Activated CD4-positive, alpha-beta memory T cell treated with anti-CD3 and anti-CD28 coated beads for 36 hours (primary cell): ENCODE measurements at regions of chr17 and their contacts with region 1.

Region 1: GRCh38 chr17:32659419-32659842 is 172.6 kb downstream of the CDK5R1 start:
- DNase-seq: peak; percentile 80
- H3K4me3 Mint-ChIP-seq: no peak overlapping the region
- H3K27ac Mint-ChIP-seq: no peak overlapping the region
- H3K4me1 Mint-ChIP-seq: no peaks in the 10 kb centered on the region
- H3K27me3 Mint-ChIP-seq: no peaks in the 10 kb centered on the region

Region 2: DNA sequence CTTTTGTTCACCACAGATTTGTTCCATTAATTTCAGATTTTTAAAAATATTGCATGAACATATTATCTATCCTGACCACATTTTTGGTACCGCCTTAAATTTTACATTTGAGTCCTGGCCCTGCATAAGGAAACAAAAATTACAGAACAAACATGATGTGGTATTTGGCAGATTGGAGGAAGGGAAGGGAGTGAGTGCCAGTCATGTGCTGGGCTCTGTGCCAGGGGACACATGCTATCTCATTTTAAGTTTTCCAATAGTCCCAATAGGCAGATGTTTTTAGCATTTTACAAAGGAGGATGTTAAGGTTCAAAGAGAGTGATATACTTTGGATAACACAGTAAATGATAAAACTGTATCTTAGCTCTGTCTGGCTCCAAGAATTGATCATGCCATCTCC is 12.5 kb after region 1 on chr17:
- CTCF ChIA-PET with region 1: interaction called, 14 read pairs
- POLR2A ChIA-PET with region 1: no interaction called
- intact Hi-C with region 1: no loop called
- DNase-seq: no peak
- H3K4me3 Mint-ChIP-seq: no peak overlapping the region
- H3K27ac Mint-ChIP-seq: no peak overlapping the region
- H3K4me1 Mint-ChIP-seq: no peaks in the 10 kb centered on the region
- H3K27me3 Mint-ChIP-seq: no peaks in the 10 kb centered on the region

Region 3: DNA sequence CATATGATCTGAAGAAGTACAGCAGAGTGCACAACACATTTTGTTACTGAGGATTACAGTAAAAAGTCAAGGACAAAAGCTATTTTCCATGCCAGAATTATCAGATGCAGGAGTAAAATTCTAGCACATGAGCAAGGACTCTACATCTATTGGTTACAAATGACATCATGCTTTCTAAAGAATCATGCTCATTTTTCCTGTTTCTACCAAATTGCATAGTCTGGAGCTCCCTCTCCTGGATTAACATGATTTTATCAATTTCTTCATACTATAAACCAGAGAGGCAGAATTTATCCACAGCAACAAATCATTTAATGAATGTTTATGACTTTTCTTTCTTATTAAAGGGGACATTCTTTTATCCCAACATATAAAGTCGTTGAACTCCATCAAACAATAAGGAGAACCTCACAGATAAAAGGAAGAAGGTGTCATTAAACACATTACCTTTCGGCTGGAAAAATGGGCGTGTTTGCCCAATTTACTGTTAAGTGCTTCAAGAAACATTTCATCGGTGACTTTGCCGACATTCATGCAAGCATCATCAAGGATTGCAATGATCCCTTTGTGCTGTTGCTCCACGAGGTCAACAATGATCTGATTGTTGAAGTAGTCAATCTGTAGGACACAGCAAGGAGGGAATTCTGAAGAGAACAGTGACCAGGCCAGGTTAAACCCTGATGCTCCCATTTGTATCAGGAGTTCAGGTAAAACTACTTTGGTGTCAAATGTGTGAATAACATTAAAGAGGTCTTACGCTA is 95.8 kb after region 1 on chr17:
- CTCF ChIA-PET with region 1: interaction called, 13 read pairs
- POLR2A ChIA-PET with region 1: no interaction called
- intact Hi-C with region 1: loop called (anchors 1 kb)
- DNase-seq: no peak
- H3K4me3 Mint-ChIP-seq: no peak overlapping the region
- H3K27ac Mint-ChIP-seq: no peak overlapping the region
- H3K4me1 Mint-ChIP-seq: peaks cover 15% of the 10 kb centered on the region
- H3K27me3 Mint-ChIP-seq: no peaks in the 10 kb centered on the region